Left ventricle myocardium superior (tissue), 1 donor: ENCODE measurements at regions of chr10 and their contacts with region 1.

Region 1: GRCh38 chr10:90787393-90788198 is 70.2 kb downstream of the HTR7 start:
- DNase-seq: no peak
- ATAC-seq: peak; percentile 36

Region 2: DNA sequence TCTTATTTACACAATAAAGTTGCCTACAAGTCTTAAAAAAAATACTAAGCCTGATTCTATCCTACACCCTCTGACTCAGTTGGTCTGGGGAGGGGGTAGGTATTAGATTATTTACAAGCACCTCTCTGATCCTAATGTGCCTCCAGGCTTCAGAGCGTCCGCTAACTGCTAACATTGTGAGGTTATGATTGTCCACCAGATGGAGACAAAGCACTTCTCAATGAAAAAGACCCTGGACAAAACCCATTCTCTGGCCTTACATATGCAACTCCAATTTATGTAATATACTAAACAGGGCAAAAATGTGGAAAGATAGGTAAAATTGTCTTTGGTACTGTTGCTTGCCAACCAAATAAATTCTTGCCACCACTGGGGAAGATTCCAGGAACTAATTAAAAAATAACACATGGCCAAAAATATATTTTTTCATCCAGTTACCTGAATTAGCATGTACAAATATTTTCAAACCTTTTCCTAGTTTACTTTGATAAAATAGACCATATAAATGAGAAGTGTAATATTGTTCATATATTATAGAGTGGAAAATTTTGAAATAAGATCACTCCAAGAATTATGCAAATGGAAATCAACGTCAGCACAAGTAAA is 993.8 kb before region 1 on chr10:
- intact Hi-C with region 1: loop called (anchors 10 kb)
- DNase-seq: no peak
- ATAC-seq: peak; percentile 64

Region 3: DNA sequence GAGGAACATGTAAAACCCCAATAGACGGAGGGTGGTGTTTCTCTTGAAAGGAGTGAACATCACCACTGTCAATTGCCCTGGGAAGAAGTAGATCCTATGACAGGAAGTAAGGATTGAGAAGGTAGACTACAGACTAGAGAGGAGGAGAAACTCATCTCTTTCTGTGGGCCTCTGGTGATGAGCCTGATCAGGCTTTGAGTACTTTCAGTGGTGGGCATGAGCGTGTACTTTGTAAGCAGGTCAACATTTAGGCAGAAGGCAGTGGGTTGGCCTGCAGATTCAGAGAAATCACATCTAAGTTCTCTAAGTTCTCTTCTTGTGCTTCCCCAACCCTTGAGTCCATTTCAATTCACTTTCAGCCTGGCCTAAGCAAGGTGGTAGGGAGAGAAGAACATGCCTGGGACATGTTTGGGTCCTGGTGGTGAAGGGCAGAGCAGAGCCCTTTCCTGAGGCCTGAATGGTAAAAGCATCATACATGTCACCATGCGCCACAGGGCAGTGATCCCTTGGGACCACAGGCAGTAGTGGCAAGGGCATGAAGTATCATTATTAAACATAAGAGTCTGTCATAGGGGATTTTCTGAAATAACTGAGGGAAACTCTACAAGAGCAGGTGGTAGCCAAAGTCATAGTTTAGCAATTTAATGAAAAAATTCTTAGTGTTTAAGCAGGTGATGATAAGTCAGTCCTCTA is 189.7 kb after region 1 on chr10:
- intact Hi-C with region 1: no loop called
- DNase-seq: no peak
- ATAC-seq: no peak